ENCODE measurements at regions of chr9 and their contacts with region 1.

Region 1: DNA sequence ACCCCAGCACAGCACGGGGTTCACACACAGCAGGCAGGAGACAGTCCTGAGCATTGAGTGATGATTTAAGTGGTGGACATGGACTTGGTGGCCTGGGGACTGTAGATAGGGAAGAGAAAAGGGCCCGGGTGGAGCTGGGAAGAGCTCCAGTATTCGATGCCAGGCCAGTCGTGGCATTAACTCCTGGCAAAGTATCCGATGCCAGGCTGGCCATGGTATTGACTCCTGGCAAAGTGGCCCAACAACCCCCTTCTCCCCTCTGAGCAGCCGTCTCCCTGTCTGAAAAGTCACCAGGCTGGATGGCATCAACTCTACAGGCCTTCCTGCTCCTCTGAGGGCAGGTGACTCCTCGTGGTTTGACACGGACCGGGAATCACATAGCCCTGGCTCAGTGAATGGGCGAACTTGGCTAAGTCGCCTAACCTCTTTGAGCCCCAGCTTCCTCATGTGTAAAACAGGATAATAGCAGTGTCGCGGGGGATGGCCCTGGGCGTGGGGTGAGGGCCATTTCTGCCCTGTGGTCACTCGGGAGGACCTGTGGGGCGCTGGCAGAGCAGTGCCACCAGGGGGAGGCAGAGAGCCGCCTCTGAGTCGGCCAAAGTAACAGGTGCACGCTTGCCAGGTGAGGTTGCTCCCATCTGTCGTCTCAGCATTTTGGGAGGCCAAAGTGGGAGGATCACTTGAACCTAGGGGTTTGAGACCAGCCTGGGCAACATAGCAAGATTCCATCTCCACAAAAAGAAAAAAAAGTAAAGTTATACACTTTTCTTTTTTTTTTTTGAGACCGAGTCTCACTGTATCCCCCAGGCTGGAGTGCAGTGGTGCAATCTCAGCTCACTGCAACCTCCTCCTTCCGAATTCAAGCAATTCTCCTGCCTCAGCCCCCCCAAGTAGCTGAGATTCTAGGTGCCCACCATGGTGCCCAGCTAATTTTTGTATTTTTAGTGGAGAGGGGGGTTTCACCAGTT is 5.7 kb upstream of the SEC16A start:
- DNase-seq: peak; percentile 62
- H3K4me3 Mint-ChIP-seq: no peak overlapping the region
- H3K27ac Mint-ChIP-seq: no peak overlapping the region
- H3K4me1 Mint-ChIP-seq: peaks cover 8% of the 10 kb centered on the region
- H3K27me3 Mint-ChIP-seq: peaks cover 4% of the 10 kb centered on the region

Region 2: DNA sequence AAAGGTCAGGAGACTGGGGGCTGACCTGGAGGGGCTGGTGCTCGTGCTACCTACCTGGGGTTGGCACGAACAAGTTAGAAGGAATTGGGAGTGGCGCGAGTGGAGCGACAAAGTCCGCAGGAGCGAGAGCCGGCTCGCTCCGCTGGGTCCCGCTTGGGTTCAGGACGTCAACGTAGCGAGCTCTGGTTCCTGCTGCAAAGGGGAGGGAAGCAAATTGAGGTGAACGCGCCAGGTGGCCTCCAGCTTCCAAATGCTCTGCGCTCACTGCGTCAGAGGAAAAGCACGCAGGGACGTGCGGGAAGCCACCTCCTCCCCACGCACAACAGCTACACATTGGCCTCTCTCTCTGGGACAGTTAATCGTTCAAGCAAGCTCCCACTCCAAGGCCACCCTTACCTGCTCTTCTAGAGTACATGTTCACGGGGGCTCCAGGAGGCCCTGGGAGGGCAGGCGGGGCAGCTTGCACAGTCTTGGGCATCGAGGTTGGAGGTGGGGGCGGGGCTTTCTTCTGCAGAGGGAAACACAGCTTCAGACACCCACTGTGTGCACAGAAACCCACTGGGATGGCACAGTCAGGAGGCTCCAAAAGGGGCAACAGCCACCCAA is 41.3 kb before region 1 on chr9:
- intact Hi-C with region 1: no loop called
- DNase-seq: no peak
- H3K4me3 Mint-ChIP-seq: no peak overlapping the region
- H3K27ac Mint-ChIP-seq: no peak overlapping the region
- H3K4me1 Mint-ChIP-seq: no peaks in the 10 kb centered on the region
- H3K27me3 Mint-ChIP-seq: no peaks in the 10 kb centered on the region

Region 3: GRCh38 chr9:136525841-136526499 is 37.4 kb after region 1 on chr9:
- intact Hi-C with region 1: no loop called
- DNase-seq: no peak
- H3K4me3 Mint-ChIP-seq: no peak overlapping the region
- H3K27ac Mint-ChIP-seq: no peak overlapping the region
- H3K4me1 Mint-ChIP-seq: no peaks in the 10 kb centered on the region
- H3K27me3 Mint-ChIP-seq: no peaks in the 10 kb centered on the region

Region 4: GRCh38 chr9:136631038-136632000 is 142.8 kb after region 1 on chr9:
- intact Hi-C with region 1: loop called (anchors 1 kb)
- DNase-seq: peak; percentile 65
- H3K4me3 Mint-ChIP-seq: no peak overlapping the region
- H3K27ac Mint-ChIP-seq: no peak overlapping the region
- H3K4me1 Mint-ChIP-seq: no peaks in the 10 kb centered on the region
- H3K27me3 Mint-ChIP-seq: peaks cover 8% of the 10 kb centered on the region

Region 5: DNA sequence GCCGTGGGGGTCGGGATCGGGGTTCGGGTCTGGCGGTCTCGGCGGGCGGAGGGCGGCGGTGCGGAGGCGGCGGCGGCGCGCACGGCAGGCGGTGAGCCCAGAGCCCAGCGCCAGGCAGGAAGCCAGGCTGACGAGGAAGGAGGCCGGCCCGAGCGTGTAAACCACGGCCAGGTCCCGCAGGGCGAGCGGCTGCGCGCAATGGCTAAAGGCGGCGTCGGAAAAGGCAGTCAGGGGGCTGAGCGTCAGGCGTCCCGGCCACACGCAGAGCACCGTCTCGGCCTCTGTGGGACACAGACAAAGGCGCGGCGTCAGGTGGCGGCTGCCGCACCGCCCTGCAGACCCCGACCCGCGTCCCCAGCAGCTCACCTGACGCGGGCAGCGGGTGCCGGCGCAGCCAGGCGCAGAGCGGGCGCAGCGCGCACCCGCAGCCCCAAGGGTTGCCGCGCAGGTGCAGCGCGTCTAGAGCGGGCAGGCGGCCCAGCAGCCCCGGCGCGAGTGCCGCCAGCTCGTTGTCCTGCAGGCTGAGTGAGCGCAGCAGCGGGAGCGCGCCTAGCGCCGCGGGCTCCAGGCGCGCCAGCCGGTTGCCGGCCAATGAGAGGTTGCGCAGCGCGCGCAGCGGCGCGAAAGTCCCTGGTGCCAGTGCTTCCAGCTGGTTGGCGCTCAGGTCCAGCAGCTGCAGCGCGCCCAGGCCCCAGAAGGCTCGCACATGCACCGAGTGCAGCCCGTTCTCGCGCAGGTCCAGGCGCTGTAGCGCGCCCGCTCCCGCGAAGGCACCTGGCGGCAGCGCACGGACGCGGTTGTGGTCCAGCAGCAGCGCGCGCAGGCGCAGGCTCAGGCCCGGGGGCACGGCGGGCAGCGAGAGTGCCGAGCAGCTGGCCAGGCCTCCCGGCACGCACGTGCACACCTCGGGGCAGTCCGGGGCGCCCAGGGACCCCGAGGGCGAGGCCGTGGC is 680.6 kb after region 1 on chr9:
- intact Hi-C with region 1: no loop called
- DNase-seq: no peak
- H3K4me3 Mint-ChIP-seq: no peak overlapping the region
- H3K27ac Mint-ChIP-seq: no peak overlapping the region
- H3K4me1 Mint-ChIP-seq: no peaks in the 10 kb centered on the region
- H3K27me3 Mint-ChIP-seq: peaks cover 30% of the 10 kb centered on the region